Heart right ventricle (tissue), 16 donors: ENCODE measurements at regions of chr6 and their contacts with region 1.

Region 1: DNA sequence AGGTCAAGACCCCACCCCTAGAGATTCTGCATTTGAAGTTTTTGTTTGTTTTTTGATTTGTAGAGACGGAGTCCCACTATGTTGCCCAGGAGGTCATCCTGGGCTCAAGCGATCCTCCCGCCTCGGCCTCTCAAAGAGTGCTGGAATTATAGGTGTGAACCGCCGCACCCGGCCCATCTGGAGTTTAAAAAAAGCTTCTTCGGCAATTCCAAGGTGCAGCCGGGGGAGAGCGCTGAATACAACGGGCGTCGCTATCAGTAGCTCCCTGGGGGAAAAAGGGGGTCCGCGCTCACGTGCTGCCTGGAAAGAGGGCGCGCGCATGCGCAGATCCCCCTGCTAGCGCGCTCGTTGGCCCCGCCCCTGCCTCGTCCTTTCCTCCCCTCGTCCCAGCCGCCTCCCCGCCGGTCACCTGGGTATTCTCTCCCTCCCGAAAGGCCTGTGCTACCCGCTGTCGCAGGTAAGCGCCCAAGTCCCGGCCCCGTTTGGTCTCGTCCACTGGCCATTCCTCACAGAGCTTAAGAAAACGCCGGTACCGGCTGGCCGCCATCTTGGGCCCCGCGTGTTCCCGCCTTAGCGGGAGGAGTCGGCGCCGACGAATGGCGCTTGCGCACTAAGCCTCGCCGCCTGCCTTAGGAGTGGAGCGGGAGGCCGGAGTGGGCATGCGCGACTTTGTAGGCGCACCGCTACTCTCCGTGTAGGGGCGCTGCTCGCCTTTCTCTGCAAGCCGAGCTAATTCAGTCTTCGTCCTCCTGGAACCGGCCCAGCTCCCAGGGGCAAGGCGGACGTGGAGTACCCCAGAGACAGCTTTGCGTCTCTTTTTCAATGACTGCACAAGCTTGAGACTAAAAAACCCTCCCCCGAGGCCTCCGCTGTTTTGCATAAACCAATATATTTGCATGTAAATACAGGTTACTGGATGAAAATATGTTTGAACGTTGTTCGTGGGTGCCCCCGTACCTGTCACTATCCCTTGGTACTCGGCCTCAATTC is at the start of gene UQCC2:
- DNase-seq: peak; percentile 97 to 99
- ATAC-seq: peak; percentile 93 to 99 (median 98)
- H3K4me3 ChIP-seq: peak within 1 kb of the TSS; percentile 41 to 86 (median 71)
- H3K27ac ChIP-seq: peak within 1 kb of the TSS; percentile 46 to 96 (median 94)
- H3K4me1 ChIP-seq: peaks cover 6 to 48% (median 33%) of the 10 kb centered on the region in 9 donors
- H3K27me3 ChIP-seq: no peaks in the 10 kb centered on the region
- CTCF ChIP-seq: peak; percentile 44 to 95 (median 69)
- total RNA-seq, gene UQCC2: 222 to 328 (median 245) TPM

Region 2: DNA sequence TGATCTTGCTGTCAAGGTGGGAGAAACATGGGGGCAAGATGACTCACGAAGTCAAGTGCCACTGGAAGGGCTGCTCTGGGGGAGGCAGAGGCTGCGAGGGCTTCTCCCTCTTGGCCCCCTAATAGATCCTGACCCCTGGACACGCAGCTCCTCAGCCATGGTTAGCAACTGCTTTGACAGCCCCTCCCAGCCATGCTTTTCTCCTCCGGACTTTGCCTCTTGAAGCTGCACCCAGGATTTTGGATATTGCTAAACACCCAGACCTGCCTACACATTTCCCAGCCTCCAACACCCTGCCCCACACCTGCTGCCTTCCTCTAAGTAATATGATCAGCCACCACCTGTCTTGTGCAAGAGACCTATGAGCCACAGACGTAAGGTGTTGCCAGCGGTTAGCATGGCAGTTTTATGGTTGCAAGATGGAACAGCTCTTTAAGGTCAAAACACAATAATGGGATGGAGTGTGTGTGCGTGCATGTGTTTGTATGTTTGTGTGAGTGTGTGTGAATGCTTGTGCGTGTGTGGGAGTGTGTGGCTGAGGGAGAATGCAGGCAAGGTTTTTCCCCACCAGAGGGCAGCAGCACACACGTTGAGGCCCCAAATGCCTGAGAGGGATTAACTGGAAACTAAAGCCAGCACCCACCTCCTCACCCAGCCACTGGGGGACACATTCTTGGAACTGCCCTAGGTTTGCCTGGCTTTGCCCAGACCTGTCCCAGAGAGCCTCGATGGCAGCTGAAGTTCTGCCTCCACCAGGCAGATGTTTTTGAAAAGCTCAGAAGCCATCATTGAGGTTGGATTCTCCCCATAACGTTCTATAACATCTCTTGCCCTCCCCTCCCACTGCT is 32.8 kb after region 1 on chr6:
- intact Hi-C with region 1: loop called in 1 of 10 experiments (anchors 1 kb)
- DNase-seq: peak; percentile 62 to 76
- ATAC-seq: peak in 7 of 8 donors; percentile 5 to 64 (median 34)
- H3K4me3 ChIP-seq: peak overlapping the region in 8 of 10 donors; percentile 39 to 59 (median 51)
- H3K27ac ChIP-seq: peak overlapping the region; percentile 69 to 95 (median 88)
- H3K4me1 ChIP-seq: peaks cover 6 to 71% (median 40%) of the 10 kb centered on the region in 9 donors
- H3K27me3 ChIP-seq: peaks cover 0 to 14% (median 0%) of the 10 kb centered on the region in 7 donors
- CTCF ChIP-seq: peak; percentile 70 to 92 (median 85)

Region 3: GRCh38 chr6:33751771-33752645 is 40.6 kb after region 1 on chr6:
- intact Hi-C with region 1: loop called in 1 of 10 experiments (anchors 5 kb)
- DNase-seq: no peak
- ATAC-seq: no peak
- H3K4me3 ChIP-seq: no peak overlapping the region
- H3K27ac ChIP-seq: no peak overlapping the region
- H3K4me1 ChIP-seq: peaks cover 0 to 9% (median 2%) of the 10 kb centered on the region in 9 donors
- H3K27me3 ChIP-seq: no peaks in the 10 kb centered on the region
- CTCF ChIP-seq: no peak

Region 4: DNA sequence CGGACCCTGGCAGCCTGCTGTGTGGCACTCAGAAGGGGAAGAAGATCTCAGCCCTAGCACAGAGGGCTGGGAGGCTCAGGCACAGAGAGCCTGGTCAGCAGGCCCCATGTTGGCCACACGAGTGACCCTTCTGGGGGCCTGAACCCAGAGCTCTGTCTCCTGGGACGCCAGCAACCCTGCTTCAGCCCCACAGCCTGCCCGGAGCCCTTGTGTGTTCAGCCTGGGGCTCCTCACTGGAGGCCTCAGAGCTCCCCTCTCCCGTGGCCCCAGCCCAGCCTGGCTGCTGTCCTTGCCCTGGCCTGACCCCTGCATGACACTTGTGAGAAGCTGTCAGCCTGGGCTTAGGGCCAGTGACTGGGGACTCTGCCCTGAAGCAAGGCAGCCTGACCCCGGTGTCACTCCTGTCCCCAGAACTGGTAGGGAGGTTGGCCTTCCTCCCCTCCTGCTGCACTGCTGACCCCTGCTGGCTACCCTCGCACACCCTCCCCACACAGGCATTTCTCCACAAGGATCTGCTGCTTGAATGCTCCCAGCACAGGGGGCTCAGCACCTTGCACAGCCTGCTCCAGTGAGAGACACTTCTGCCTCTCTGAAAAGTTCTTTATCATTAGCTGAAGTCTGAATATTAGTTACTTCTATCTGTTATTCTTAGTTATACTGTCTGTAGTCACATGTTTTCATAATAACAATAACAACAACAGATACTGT is 50.6 kb after region 1 on chr6:
- intact Hi-C with region 1: loop called in 7 of 10 experiments (anchors 1 to 5 kb)
- DNase-seq: peak; percentile 80 to 87
- ATAC-seq: peak; percentile 85 to 95 (median 91)
- H3K4me3 ChIP-seq: peak overlapping the region in 1 of 10 donors; percentile 3
- H3K27ac ChIP-seq: peak overlapping the region; percentile 14 to 82 (median 71)
- H3K4me1 ChIP-seq: peaks cover 2 to 30% (median 19%) of the 10 kb centered on the region in 9 donors
- H3K27me3 ChIP-seq: no peaks in the 10 kb centered on the region
- CTCF ChIP-seq: peak; percentile 44 to 78 (median 66)